HCT116 (cell line): ENCODE measurements at regions of chr13 and their contacts with region 1.

Region 1: DNA sequence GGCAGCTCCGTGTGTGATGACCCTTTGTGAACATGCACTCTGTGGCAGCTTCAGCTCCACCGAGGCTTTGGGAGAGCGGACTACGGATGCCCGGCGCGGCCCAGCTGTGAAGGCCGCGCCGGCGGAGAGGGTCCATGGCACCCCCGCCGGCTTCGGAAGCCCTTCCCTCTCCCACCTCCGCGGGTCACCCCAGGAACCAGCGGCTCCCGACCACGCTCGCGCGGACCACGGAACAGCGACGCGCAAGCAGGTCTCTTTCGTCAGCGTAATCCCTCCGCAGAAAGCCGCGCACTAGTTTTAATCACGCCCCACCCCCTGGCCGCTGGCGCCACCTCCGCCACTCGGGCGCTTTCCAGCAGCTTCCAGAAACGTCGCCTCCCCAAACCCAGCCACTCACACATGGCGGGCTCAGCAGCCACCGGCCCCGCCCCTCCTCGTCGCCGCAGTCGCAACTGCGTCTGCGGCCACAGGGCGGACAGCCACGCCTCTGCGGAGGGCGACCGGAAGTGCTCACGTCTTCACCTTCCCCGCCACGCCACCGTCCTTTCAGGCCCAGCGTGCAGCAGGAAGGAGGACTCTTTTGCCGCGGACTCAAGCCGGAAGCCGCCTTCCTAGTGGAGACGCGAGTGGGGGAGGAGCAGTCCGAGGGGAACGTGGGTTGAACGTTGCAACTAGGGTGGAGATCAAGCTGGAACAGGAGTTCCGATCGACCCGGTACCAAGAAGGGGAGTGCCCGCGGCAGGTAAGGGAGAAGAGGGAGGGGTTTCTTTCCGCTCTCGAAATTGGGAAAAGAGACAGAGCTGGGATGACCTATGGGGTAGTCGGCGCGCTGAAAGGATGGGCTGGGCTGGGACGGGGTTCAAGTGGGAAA is at the start of gene USPL1:
- DNase-seq: peak; percentile 98
- ATAC-seq: peak; percentile 91
- H3K4me3 ChIP-seq: peak within 1 kb of the TSS; percentile 92
- H3K27ac ChIP-seq: peak within 1 kb of the TSS; percentile 97
- H3K4me1 ChIP-seq: peaks cover 18 to 36% of the 10 kb centered on the region in 2 experiments
- H3K27me3 ChIP-seq: no peaks in the 10 kb centered on the region
- CTCF ChIP-seq: no peak
- POLR2A ChIP-seq: peak; percentile 58
- RAD21 ChIP-seq: no peak
- total RNA-seq, gene USPL1: 19.7 TPM

Region 2: DNA sequence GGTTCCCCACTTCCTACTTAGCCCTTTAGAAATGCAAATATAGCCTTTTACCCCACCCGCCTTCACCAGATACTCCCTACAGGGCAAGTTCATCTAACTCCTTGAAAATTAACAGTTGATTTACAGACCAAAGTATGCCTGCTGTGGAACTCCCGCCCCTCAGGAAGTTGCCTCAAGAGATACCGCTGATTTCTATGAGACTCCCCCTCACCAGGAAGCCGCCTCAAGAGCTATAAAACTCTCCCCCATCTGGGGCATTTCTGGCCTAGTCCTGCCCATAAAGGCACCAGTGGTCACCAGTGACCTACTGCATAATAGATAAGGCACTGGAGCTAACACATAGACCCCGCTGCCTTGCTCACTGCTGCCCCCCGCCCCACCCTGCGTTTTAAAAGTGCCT is 565.4 kb before region 1 on chr13:
- CTCF ChIA-PET with region 1: no interaction called
- POLR2A ChIA-PET with region 1: no interaction called
- RAD21 ChIA-PET with region 1: no interaction called
- intact Hi-C with region 1: no loop called
- DNase-seq: no peak
- ATAC-seq: no peak
- H3K4me3 ChIP-seq: no peak overlapping the region
- H3K27ac ChIP-seq: no peak overlapping the region
- H3K4me1 ChIP-seq: no peaks in the 10 kb centered on the region
- H3K27me3 ChIP-seq: no peaks in the 10 kb centered on the region
- CTCF ChIP-seq: no peak
- POLR2A ChIP-seq: no peak
- RAD21 ChIP-seq: no peak

Region 3: DNA sequence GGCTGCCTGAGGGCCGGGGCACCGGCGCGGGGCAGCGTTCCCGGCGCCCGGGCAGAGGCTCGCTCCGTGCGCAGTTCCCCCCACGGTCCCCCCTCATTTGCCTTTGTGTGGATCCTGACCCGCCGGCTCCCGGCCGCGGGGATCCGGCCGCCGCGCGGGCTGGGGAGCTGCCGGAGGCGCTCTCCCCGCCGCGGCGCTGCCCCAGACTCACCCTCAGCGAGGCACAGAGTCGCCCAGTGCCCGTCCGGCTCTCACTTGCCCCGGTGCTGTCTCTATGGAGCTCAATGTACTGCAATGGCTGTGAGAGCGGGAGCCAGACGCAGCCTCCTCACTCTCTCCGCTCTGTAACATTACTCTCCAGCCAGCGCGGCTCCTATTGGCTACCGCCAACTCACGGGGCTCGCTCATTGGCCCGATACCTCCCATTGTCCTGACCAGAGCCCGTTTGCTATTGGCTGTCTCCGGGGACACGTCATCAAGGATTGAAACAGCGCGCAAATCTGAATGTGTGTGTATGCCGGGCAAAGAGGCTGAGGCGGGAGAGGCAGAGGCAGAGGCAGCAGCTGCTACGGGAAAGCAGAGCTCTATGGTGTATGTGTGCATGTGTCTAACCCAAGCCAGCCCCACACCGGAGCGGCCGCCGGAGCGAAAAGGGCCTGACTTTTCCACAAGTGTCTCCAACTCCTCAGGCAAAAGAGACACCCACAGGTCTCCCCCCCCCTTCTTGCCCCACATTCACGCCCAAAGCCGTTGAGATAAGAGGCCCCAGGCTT is 151.8 kb before region 1 on chr13 and contains the start of gene HMGB1:
- CTCF ChIA-PET with region 1: no interaction called
- POLR2A ChIA-PET with region 1: interaction called, 4 read pairs
- RAD21 ChIA-PET with region 1: no interaction called
- intact Hi-C with region 1: loop called (anchors 1 kb)
- DNase-seq: peak; percentile 98
- ATAC-seq: peak; percentile 90
- H3K4me3 ChIP-seq: peak within 1 kb of the TSS; percentile 73 to 80
- H3K27ac ChIP-seq: peak within 1 kb of the TSS; percentile 99
- H3K4me1 ChIP-seq: peaks cover 11 to 32% of the 10 kb centered on the region in 2 experiments; a peak in 3 of 4 replicates
- H3K27me3 ChIP-seq: no peaks in the 10 kb centered on the region
- CTCF ChIP-seq: no peak
- POLR2A ChIP-seq: peak; percentile 77
- RAD21 ChIP-seq: no peak
- total RNA-seq, gene HMGB1: 678 TPM

Region 4: GRCh38 chr13:30600496-30600895 is 17.1 kb before region 1 on chr13:
- CTCF ChIA-PET with region 1: no interaction called
- POLR2A ChIA-PET with region 1: no interaction called
- RAD21 ChIA-PET with region 1: no interaction called
- intact Hi-C with region 1: no loop called
- DNase-seq: no peak
- ATAC-seq: no peak
- H3K4me3 ChIP-seq: no peak overlapping the region
- H3K27ac ChIP-seq: no peak overlapping the region
- H3K4me1 ChIP-seq: no peaks in the 10 kb centered on the region
- H3K27me3 ChIP-seq: no peaks in the 10 kb centered on the region
- CTCF ChIP-seq: no peak
- POLR2A ChIP-seq: no peak
- RAD21 ChIP-seq: no peak

Region 5: DNA sequence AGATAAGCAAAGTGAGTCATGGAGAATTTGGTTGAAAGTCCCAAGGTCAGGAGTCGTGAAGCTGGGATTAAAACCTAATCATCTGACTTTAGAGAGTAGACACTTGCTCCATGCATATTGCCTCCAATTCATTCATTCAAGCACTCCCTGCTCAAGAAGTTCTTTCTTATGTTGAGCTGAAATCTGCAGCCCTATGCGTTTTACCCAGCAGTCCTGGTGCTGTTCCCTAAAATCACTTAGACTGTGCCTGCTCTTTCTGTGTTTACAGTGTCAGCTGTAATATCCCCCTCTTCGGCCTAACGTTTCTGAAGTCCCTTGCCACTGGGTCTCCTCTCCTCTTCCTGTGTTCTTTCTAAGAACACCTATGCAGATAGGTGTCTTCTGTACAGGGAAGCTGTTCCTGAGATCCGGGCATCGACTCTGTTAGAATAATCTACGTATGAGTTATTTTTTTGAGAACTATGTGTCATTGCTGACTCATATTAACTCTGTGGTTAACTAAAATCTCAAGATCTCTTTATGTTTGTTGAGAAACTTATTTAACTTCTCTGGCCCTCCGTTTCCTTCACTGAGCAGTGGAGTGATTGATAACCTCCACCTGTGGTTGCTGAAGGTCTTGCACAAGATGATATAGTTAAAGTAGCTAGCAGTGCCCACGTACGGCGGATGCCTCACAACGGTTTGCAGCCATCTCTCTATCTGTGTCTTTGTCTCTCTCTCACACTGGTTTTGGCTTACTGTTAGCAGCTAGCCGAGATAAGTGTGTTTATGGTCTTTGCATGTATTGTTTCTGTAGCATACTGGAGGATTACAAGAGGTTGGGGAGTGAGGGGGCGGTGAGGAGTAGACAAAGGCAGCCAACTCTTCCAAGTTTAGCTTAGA is 122.5 kb after region 1 on chr13:
- CTCF ChIA-PET with region 1: no interaction called
- POLR2A ChIA-PET with region 1: no interaction called
- RAD21 ChIA-PET with region 1: no interaction called
- intact Hi-C with region 1: loop called (anchors 5 kb)
- DNase-seq: peak; percentile 52
- ATAC-seq: peak; percentile 67
- H3K4me3 ChIP-seq: peak overlapping the region in 1 of 2 experiments; percentile 26
- H3K27ac ChIP-seq: no peak overlapping the region
- H3K4me1 ChIP-seq: peaks cover 34 to 41% of the 10 kb centered on the region in 2 experiments
- H3K27me3 ChIP-seq: peaks cover 47% of the 10 kb centered on the region
- CTCF ChIP-seq: no peak
- POLR2A ChIP-seq: no peak
- RAD21 ChIP-seq: no peak